ENCODE measurements at regions of chr2 and their contacts with region 1.

Region 1: GRCh38 chr2:64114063-64114911 is 29.9 kb downstream of the PELI1 start:
- DNase-seq: no peak
- H3K4me3 Mint-ChIP-seq: no peak overlapping the region
- H3K27ac Mint-ChIP-seq: peak overlapping the region; percentile 1
- H3K4me1 Mint-ChIP-seq: peaks cover 80% of the 10 kb centered on the region
- H3K27me3 Mint-ChIP-seq: no peaks in the 10 kb centered on the region

Region 2: DNA sequence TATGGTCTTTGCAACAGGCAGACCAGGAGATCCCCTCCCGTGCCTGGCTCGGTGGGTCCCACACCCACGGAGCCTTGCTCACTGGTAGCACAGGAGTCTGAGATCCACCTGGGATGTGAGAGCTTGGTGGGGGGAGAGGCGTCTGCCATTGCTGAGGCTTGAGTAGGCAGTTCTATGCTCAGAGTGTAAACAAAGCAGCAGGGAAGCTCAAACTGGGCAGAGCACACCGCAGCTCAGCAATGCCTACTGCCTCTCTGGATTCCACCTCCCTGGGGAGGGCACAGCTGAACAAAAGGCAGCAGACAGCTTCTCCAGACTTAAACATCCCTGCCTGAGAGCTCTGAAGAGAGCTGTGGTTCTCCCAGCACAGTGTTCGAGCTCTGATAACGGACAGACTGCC is 187.5 kb before region 1 on chr2:
- CTCF ChIA-PET with region 1: no interaction called
- intact Hi-C with region 1: no loop called
- DNase-seq: no peak
- H3K4me3 Mint-ChIP-seq: no peak overlapping the region
- H3K27ac Mint-ChIP-seq: no peak overlapping the region
- H3K4me1 Mint-ChIP-seq: no peaks in the 10 kb centered on the region
- H3K27me3 Mint-ChIP-seq: no peaks in the 10 kb centered on the region

Region 3: GRCh38 chr2:64086347-64087082 is 27.8 kb before region 1 on chr2:
- CTCF ChIA-PET with region 1: no interaction called
- intact Hi-C with region 1: no loop called
- DNase-seq: no peak
- H3K4me3 Mint-ChIP-seq: no peak overlapping the region
- H3K27ac Mint-ChIP-seq: no peak overlapping the region
- H3K4me1 Mint-ChIP-seq: peaks cover 16% of the 10 kb centered on the region
- H3K27me3 Mint-ChIP-seq: no peaks in the 10 kb centered on the region

Region 4: GRCh38 chr2:64101141-64101591 is 13.1 kb before region 1 on chr2:
- CTCF ChIA-PET with region 1: interaction called, 8 read pairs
- intact Hi-C with region 1: loop called (anchors 1 kb)
- DNase-seq: no peak
- H3K4me3 Mint-ChIP-seq: no peak overlapping the region
- H3K27ac Mint-ChIP-seq: peak overlapping the region; percentile 76
- H3K4me1 Mint-ChIP-seq: peaks cover 51% of the 10 kb centered on the region
- H3K27me3 Mint-ChIP-seq: no peaks in the 10 kb centered on the region

Region 5: GRCh38 chr2:64767670-64768468 is 653.6 kb after region 1 on chr2:
- CTCF ChIA-PET with region 1: no interaction called
- intact Hi-C with region 1: no loop called
- DNase-seq: peak; percentile 85
- H3K4me3 Mint-ChIP-seq: peak overlapping the region; percentile 80
- H3K27ac Mint-ChIP-seq: peak overlapping the region; percentile 76
- H3K4me1 Mint-ChIP-seq: peaks cover 26% of the 10 kb centered on the region
- H3K27me3 Mint-ChIP-seq: no peaks in the 10 kb centered on the region

Measured in activated naive CD4-positive, alpha-beta T cell treated with anti-CD3 and anti-CD28 coated beads for 36 hours (primary cell).